Activated CD8-positive, alpha-beta memory T cell treated with anti-CD3 and anti-CD28 coated beads, Interleukin-2, amount 10 ng/mL, durations not matched to agents 7 days and 5 days (primary cell): ENCODE measurements at regions of chr1 and their contacts with region 1.

Region 1: DNA sequence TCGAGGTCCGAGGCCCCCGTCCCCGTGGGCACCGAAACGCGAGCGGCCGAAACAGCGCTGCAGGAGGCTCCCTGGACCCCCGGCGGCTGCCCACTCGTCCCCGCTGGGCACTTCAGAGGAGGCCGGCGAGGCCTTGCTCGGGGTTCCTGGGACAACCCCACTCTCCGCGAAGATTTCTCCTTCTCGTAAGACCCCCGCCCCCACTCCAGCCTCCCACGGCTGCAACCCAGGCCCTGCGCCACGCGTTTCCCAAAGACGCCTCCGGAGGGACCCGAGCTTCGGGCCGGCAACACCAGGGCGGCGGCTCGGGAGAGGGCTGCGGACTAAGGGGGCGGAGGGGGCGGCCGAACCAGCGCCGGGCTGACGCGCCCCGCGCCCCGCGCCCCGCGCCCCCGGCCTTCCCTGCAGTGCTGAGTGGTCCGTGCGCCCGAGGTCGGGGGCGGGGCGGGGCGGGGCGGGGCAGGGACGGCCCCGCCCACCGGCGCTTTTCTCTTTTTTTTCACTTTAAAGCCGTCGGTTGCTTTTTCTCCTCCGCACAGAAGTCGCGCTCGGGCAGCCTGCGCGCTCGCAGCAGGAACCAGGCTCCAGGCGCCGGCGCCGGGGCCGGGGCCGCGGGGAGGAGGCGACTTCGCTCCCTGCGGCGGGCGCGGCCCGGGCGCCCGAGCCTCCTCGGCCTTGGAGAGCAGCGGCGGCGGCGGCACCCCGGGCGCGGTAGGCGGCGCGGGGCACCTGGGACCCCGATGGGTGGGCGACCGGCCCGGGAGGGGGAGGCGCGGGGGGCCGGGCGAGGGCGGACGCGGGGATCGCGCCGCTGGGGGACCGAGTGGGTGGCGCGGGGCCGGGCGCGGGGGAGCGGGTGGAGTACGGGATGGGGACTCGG is at the start of gene SPSB1:
- DNase-seq: peak; percentile 75
- ATAC-seq: peak; percentile 72
- H3K4me3 Mint-ChIP-seq: peak within 1 kb of the TSS; percentile 40
- H3K27ac Mint-ChIP-seq: no peak within 1 kb of the TSS
- H3K4me1 Mint-ChIP-seq: peaks cover 9% of the 10 kb centered on the region
- H3K27me3 Mint-ChIP-seq: peaks cover 15% of the 10 kb centered on the region
- total RNA-seq, gene SPSB1: 8.2 to 9.0 TPM

Region 2: DNA sequence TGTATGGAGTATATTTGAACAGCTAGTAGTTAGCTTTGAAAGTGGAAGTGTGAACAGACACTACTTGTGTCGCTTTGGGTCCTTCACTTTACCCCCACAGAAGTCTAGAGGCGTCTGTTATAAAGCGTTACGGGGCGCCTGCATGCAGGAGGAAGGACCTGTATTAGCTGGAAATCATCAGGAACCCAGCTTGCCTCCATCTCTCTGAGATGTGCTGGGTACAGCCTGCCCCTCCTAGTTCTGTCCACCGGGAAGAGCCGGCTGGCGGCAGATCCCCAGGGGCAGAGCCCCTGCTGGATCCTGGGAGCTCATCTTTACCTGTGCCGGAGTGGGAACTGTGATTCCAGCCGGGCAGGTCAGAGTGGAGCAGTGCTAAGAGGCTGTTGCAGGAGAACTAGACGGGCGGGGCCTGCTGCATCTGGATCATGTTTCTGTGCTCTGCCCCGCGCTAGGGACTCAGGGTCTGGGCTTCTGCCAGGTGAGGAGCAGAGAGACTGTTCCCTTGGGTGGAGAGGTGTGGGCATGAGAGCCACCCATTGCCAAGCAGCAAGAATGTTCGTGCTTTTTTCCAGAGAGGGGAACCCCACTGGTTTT is 22.2 kb before region 1 on chr1:
- CTCF ChIA-PET with region 1: interaction called, 37 read pairs
- DNase-seq: no peak
- ATAC-seq: no peak
- H3K4me3 Mint-ChIP-seq: no peak overlapping the region
- H3K27ac Mint-ChIP-seq: no peak overlapping the region
- H3K4me1 Mint-ChIP-seq: peaks cover 15% of the 10 kb centered on the region
- H3K27me3 Mint-ChIP-seq: peaks cover 5% of the 10 kb centered on the region

Region 3: GRCh38 chr1:9275567-9276034 is 17.0 kb before region 1 on chr1:
- CTCF ChIA-PET with region 1: interaction called, 27 read pairs
- DNase-seq: peak; percentile 93
- ATAC-seq: peak; percentile 92
- H3K4me3 Mint-ChIP-seq: peak overlapping the region; percentile 10
- H3K27ac Mint-ChIP-seq: peak overlapping the region; percentile 78
- H3K4me1 Mint-ChIP-seq: peaks cover 41% of the 10 kb centered on the region
- H3K27me3 Mint-ChIP-seq: peaks cover 8% of the 10 kb centered on the region

Region 4: DNA sequence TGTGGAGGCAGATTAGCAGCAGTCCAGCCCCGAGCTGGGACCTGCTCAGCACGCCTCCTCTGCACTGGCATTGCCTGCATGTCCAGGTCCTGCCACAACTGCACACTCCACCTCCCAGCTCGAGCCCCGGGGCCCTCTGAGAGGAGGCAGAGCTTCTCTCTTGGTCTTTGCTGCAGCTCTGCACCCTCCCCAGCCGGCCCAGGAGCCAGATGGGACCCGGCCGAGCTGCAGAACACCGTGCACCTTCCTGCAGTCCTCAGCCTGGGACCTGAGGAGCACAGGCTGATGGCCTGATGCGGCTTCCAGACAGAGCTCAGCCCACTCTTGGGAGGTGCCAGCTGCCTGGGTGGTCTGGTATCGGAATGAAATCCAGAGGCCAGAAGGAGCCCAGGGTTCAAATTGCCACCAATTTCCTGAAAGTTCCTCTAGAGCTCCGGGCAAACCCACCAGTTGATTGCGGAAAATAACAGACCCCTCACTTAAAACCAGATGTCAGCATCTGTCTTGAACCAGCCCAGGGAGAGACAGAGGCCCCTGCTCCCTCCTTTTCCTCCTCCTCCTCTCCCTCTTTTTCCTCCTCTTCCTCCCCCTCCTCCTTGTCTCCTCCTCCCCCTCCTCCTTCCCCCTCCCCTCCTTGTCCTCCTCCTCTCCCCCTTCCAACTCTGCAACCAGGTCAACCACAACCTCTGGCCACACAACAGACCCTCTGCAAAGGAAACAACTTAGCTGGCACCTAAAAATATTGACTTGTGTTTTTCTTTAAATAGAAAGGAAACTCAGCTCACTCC is 10.5 kb before region 1 on chr1:
- CTCF ChIA-PET with region 1: interaction called, 27 read pairs
- DNase-seq: no peak
- ATAC-seq: no peak
- H3K4me3 Mint-ChIP-seq: no peak overlapping the region
- H3K27ac Mint-ChIP-seq: peak overlapping the region; percentile 91
- H3K4me1 Mint-ChIP-seq: peaks cover 71% of the 10 kb centered on the region
- H3K27me3 Mint-ChIP-seq: peaks cover 2% of the 10 kb centered on the region

Region 5: GRCh38 chr1:9455487-9456234 is 163.1 kb after region 1 on chr1:
- CTCF ChIA-PET with region 1: interaction called, 65 read pairs
- DNase-seq: peak; percentile 68
- ATAC-seq: peak; percentile 78
- H3K4me3 Mint-ChIP-seq: no peak overlapping the region
- H3K27ac Mint-ChIP-seq: no peak overlapping the region
- H3K4me1 Mint-ChIP-seq: no peaks in the 10 kb centered on the region
- H3K27me3 Mint-ChIP-seq: peaks cover 32% of the 10 kb centered on the region